A673 (cell line): ENCODE measurements at regions of chrX and their contacts with region 1.

Region 1: GRCh38 chrX:41084044-41084892 is 977 bp upstream of the USP9X start:
- DNase-seq: peak; percentile 95
- H3K4me3 ChIP-seq: peak overlapping the region; percentile 94
- H3K27ac ChIP-seq: peak overlapping the region; percentile 100
- H3K4me1 ChIP-seq: peaks cover 6% of the 10 kb centered on the region
- H3K27me3 ChIP-seq: no peaks in the 10 kb centered on the region
- CTCF ChIP-seq: no peak

Region 2: GRCh38 chrX:39905538-39905891 is 1178.8 kb before region 1 on chrX:
- CTCF ChIA-PET with region 1: no interaction called
- POLR2A ChIA-PET with region 1: no interaction called
- intact Hi-C with region 1: no loop called
- DNase-seq: no peak
- H3K4me3 ChIP-seq: no peak overlapping the region
- H3K27ac ChIP-seq: no peak overlapping the region
- H3K4me1 ChIP-seq: peaks cover 17% of the 10 kb centered on the region
- H3K27me3 ChIP-seq: no peaks in the 10 kb centered on the region
- CTCF ChIP-seq: no peak

Region 3: GRCh38 chrX:40358994-40359393 is 725.3 kb before region 1 on chrX:
- CTCF ChIA-PET with region 1: no interaction called
- POLR2A ChIA-PET with region 1: no interaction called
- intact Hi-C with region 1: no loop called
- DNase-seq: no peak
- H3K4me3 ChIP-seq: no peak overlapping the region
- H3K27ac ChIP-seq: no peak overlapping the region
- H3K4me1 ChIP-seq: no peaks in the 10 kb centered on the region
- H3K27me3 ChIP-seq: no peaks in the 10 kb centered on the region
- CTCF ChIP-seq: no peak

Region 4: DNA sequence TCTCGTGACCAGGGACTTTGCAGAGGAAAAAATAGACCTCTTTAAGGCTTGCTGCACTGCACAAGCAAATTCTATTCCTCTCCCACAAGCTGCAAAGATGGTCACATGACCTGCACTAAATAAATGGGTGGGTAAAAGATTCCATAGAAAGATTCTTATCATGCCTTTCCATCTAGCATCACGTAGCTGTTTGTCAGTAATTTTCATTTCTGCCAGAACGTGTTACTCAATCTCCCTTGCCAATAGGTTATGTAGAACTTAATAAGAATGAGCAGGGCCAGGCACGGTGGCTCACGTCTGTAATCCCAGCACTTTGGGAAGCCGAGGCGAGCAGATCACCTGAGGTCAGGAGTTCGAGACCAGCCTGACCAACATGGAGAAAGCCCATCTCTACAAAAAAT is 56.8 kb before region 1 on chrX:
- CTCF ChIA-PET with region 1: no interaction called
- POLR2A ChIA-PET with region 1: no interaction called
- intact Hi-C with region 1: loop called (anchors 1 kb)
- DNase-seq: peak; percentile 68
- H3K4me3 ChIP-seq: no peak overlapping the region
- H3K27ac ChIP-seq: peak overlapping the region; percentile 47
- H3K4me1 ChIP-seq: peaks cover 12% of the 10 kb centered on the region
- H3K27me3 ChIP-seq: no peaks in the 10 kb centered on the region
- CTCF ChIP-seq: no peak